ENCODE measurements at regions of chr1 and their contacts with region 1.

Region 1: DNA sequence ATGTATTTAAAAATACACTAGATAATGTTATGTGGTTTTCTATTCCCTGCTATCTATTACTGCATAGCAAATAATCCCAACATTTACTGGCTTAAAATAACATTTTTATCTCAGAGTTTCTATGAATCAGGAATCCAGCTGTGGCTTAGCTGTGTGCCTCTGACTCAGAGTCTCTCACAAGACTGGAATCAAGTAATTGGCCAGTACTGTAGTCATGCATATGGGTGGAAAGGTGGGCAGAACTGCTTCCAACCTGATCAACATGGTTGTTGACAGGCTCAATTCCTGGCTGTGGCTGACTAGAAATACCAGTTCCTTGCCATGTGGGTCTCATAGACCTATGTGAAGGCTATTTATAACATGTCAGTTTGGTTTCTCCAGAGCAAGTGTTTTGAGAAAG is 131.8 kb downstream of the PDE4B start:
- DNase-seq: no peak
- ATAC-seq: no peak
- H3K4me3 ChIP-seq: no peak overlapping the region
- H3K4me3 Mint-ChIP-seq: no peak overlapping the region
- H3K27ac ChIP-seq: no peak overlapping the region
- H3K27ac Mint-ChIP-seq: no peak overlapping the region
- H3K4me1 ChIP-seq: no peaks in the 10 kb centered on the region
- H3K4me1 Mint-ChIP-seq: no peaks in the 10 kb centered on the region
- H3K27me3 ChIP-seq: no peaks in the 10 kb centered on the region
- H3K27me3 Mint-ChIP-seq: peaks cover 3% of the 10 kb centered on the region
- CTCF ChIP-seq: no peak

Region 2: DNA sequence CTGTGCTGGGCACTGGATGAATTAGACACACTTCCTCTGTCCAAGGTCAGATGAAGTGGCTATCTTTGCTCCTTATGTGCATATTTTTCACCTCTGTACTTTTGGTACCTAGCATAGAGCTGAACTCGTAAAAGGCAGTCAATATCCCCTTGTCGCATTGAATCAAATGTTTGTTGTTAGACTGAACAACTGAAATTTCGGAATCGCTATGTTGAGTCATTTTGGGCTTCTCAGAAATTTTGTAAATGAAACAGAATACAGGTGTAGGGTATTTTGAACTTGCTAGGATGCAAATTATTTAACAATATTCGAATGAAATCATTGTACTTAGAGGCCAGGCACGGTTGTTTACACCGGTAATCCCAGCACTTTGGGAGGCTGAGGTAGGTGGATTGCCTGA is 83.8 kb before region 1 on chr1:
- CTCF ChIA-PET with region 1: no interaction called
- POLR2A ChIA-PET with region 1: no interaction called
- intact Hi-C with region 1: no loop called
- DNase-seq: no peak
- ATAC-seq: no peak
- H3K4me3 ChIP-seq: no peak overlapping the region
- H3K4me3 Mint-ChIP-seq: no peak overlapping the region
- H3K27ac ChIP-seq: no peak overlapping the region
- H3K27ac Mint-ChIP-seq: no peak overlapping the region
- H3K4me1 ChIP-seq: no peaks in the 10 kb centered on the region
- H3K4me1 Mint-ChIP-seq: no peaks in the 10 kb centered on the region
- H3K27me3 ChIP-seq: no peaks in the 10 kb centered on the region
- H3K27me3 Mint-ChIP-seq: no peaks in the 10 kb centered on the region
- CTCF ChIP-seq: no peak

Region 3: DNA sequence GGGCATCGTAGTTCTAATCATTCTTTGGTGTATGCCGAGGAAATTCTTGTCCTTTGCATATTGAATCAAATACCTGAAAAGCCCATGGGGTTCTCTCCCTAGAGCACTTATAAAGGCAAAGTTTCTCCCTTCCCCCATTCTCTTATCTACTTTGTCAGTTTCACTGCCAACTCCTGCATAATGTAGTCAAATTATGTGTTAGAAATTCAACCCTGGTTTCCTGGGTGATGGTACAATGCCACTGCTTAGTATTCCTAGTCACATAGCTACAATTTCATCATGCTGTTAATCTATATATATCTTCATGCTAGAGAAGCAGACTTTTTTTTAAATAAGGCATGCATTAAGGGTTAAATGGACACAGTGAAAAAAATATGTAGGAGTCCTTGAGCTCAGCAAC is 12.8 kb before region 1 on chr1:
- CTCF ChIA-PET with region 1: no interaction called
- POLR2A ChIA-PET with region 1: no interaction called
- intact Hi-C with region 1: loop called in 1 of 2 experiments (anchors 1 kb)
- DNase-seq: no peak
- ATAC-seq: no peak
- H3K4me3 ChIP-seq: no peak overlapping the region
- H3K4me3 Mint-ChIP-seq: no peak overlapping the region
- H3K27ac ChIP-seq: no peak overlapping the region
- H3K27ac Mint-ChIP-seq: no peak overlapping the region
- H3K4me1 ChIP-seq: no peaks in the 10 kb centered on the region
- H3K4me1 Mint-ChIP-seq: no peaks in the 10 kb centered on the region
- H3K27me3 ChIP-seq: peaks cover 0 to 14% of the 10 kb centered on the region in 2 experiments
- H3K27me3 Mint-ChIP-seq: peaks cover 8% of the 10 kb centered on the region
- CTCF ChIP-seq: no peak

Region 4: DNA sequence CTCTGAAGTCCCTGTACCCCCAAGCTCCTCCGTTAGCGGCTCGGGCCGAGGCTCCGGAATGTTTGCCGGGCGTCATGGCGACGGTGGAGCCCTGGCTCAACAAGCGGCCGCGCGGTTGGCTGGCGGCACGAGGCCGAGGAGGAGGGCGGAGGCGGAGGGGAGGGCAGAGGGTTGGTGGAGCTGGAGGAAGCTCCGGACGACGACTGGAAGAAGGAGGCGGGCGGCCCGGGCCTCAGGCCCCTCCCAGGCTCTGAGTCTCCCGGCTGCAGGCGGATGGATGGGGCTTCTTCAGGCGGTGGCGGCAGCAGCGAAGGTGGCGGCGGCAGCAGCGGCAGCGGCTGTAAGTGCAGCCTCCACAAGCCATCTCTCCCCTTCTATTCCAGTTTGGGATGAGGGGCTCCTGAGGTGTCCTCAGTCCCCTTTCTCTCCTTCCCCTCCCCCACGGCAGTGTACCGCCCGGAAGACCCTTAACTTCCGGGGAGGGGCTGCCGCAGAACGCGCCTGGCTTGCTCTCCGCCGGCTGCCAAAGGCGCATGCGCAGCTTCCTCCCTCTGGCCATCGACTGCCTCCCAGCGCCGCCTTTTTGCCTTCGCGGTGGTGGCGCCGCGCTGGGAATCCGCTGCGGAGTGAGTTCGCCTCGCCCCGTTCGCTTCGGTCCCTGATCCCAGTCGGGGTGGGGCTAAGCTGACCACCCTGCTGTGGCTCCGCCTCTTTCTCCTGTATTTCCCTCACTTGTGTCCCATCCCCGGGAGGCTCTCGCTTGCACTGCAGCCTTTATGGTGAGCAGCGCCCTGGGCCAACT is 1000.5 kb after region 1 on chr1 and contains the starts of genes DNAI4 and MIER1:
- CTCF ChIA-PET with region 1: no interaction called
- POLR2A ChIA-PET with region 1: no interaction called
- intact Hi-C with region 1: no loop called
- DNase-seq: peak; percentile 90 to 99 (median 95)
- ATAC-seq: peak; percentile 89
- H3K4me3 ChIP-seq: peak within 1 kb of the TSS; percentile 92
- H3K4me3 Mint-ChIP-seq: peak within 1 kb of the TSS; percentile 97
- H3K27ac ChIP-seq: peak within 1 kb of the TSS; percentile 95 to 99
- H3K27ac Mint-ChIP-seq: peak within 1 kb of the TSS; percentile 98
- H3K4me1 ChIP-seq: peaks cover 24% of the 10 kb centered on the region
- H3K4me1 Mint-ChIP-seq: peaks cover 67% of the 10 kb centered on the region
- H3K27me3 ChIP-seq: no peaks in the 10 kb centered on the region
- H3K27me3 Mint-ChIP-seq: no peaks in the 10 kb centered on the region
- CTCF ChIP-seq: no peak
- total RNA-seq, gene DNAI4: 5.0 to 8.8 TPM
- total RNA-seq, gene MIER1: 106 to 107 TPM

Measured in CD4-positive, alpha-beta T cell (primary cell).